AG04450 (cell line): ENCODE measurements at regions of chr5 and their contacts with region 1.

Region 1: DNA sequence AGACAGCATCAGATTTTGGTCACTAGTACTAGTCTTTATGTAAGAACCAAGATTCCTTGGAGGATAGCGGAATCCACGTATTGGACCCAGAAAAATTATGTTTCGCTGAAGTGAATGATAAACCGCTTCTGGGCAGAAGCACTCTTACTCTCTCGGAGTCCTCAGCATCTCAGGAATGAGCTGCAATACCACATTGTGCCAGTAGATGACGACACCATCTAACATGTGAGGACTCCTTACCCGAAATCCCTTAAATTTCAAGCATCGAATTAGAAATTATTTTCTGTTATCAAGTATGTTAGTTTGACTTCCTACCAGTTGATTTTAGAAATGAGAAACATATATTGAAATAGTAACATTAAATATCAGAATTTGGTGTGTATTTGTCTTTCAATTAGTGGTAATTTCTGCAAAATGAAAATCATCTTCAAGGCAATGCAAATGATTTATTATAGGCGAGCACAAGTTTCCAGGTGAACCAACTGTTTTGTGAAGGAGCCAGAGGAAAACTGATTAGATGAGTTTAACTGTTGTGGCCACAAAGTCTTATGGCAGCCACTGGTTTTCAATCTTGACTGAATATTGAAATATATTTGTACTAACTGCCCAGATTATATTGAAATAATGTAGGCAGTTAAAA is 66.0 kb upstream of the CAMK4 start:
- DNase-seq: peak; percentile 53
- H3K4me3 ChIP-seq: no peak overlapping the region
- H3K27ac ChIP-seq: no peak overlapping the region
- H3K27me3 ChIP-seq: no peaks in the 10 kb centered on the region
- CTCF ChIP-seq: peak; percentile 100

Region 2: DNA sequence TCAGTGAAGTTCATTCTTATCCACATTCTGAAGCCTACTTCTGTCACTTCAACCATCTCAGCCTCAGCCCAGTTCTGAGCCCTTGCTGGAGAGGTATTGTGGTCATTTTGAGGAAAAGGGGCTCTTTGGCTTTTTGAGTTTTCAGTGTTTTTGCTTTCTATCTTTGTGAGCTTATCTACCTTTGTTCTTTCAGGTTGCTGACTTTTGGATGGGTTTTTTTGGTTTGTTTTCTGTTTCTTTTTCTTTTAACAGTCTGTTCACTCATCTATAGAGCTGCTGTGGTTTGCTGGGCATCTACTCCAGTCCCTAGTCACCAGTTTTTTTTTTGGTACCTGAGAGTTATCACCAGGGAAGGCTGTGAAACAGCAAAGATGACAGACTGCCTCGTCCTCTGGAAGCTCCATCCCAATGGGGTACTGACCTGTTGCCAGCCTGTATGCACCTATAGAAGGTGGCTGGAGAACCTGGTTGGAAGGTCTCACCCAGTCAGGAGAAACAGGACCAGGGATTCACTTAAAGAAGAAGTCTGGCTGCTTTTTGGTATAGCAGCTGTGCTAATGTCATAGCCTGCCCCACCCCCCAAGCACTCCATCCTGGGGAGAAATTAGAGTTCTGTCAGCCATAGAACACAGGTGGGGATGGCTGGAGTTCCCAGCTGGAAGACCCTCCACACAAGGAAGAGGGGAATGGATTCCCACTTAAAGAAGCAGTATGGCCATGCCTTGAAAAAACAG is 225.3 kb before region 1 on chr5:
- CTCF ChIA-PET with region 1: no interaction called
- POLR2A ChIA-PET with region 1: no interaction called
- DNase-seq: no peak
- H3K4me3 ChIP-seq: no peak overlapping the region
- H3K27ac ChIP-seq: no peak overlapping the region
- H3K27me3 ChIP-seq: no peaks in the 10 kb centered on the region
- CTCF ChIP-seq: no peak

Region 3: DNA sequence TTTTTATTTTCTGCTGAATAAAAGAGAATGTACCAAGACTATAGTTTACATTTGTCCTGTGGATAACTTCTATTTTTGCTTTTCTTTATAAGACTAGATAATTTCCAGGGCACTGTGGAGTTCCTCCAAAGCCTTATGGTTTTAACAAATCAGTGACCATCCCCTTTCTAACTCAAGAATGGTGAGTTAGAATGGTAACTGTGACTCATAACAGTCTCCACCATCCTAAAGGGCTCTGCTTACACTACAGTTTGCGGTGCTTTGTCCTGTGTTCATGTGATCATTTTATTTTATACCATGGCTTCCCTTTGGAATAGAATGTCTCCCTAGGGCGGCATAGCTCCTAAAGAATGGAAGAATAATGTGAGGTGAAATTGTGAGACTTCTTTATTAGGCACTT is 35.8 kb before region 1 on chr5:
- CTCF ChIA-PET with region 1: no interaction called
- POLR2A ChIA-PET with region 1: no interaction called
- DNase-seq: no peak
- H3K4me3 ChIP-seq: no peak overlapping the region
- H3K27ac ChIP-seq: no peak overlapping the region
- H3K27me3 ChIP-seq: no peaks in the 10 kb centered on the region
- CTCF ChIP-seq: no peak

Region 4: DNA sequence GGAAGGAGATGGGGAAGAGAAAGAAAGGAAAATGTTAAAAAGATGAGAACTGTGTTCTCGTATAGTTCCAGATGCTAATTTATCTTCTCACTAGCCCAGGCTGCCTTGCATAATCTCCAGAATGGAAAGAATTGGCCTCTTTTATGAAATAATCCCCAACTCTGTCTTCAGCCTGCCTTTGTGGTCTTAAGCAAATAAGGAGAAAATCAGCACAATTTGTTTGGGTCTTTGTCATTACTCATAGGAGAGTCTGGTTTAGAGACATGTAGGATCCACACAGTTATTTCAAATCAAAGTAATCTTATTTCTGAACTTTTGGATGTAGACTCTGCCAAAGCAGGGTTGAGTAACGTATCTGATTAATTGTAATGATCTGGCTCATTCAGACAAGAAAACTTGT is 15.3 kb after region 1 on chr5:
- CTCF ChIA-PET with region 1: interaction called, 10 read pairs
- POLR2A ChIA-PET with region 1: no interaction called
- DNase-seq: no peak
- H3K4me3 ChIP-seq: no peak overlapping the region
- H3K27ac ChIP-seq: no peak overlapping the region
- H3K27me3 ChIP-seq: peaks cover 2% of the 10 kb centered on the region
- CTCF ChIP-seq: no peak

Region 5: GRCh38 chr5:111278845-111279504 is 120.8 kb after region 1 on chr5:
- CTCF ChIA-PET with region 1: interaction called, 36 read pairs
- POLR2A ChIA-PET with region 1: no interaction called
- DNase-seq: no peak
- H3K4me3 ChIP-seq: no peak overlapping the region
- H3K27ac ChIP-seq: no peak overlapping the region
- H3K27me3 ChIP-seq: no peaks in the 10 kb centered on the region
- CTCF ChIP-seq: peak; percentile 65